GM23248 (cell line): ENCODE measurements at regions of chr6 and their contacts with region 1.

Region 1: DNA sequence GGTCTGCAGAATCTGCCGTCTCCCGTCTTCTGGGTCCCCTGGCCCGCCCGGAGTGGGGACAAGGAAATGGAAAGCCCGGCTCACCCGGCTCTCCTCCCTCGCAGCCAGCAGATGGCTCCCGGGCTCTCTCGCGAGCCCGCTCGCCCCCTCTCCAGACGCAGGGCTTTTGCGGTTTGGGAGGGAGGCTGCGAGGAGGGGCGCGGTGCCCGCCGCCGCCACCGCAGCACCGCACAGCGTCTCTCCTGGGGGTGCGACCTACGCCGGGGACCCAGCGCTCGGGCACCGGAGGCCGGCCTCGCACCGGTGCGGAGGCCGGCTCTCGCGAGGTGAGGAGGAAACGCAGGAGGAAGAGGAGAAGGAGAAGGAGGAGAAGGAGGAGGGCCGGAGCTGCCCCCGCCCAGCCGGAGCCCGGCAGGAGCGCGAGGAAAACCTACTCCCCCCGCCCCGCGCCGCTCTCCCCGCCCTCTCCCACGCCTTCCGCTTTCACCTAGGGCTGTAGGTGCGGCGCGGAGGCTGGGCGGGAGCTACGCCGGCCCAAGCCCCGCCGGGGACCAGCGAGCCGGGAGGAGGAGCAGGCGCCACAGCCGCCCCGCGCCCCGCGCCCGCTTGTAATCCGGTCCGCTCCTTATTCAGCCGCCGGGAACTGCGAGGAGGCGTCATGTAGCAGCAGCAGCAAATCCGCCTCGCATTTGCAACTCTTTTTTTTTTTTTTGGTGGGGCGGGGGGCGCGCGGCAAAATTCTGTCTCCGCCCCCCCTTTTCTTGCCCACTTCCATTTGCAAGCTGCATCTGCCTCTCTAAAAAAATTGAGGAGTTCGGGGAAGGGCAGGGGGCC is at the start of gene CARMIL1:
- DNase-seq: peak; percentile 89
- H3K4me3 ChIP-seq: peak within 1 kb of the TSS; percentile 93
- H3K27ac ChIP-seq: no peak within 1 kb of the TSS
- H3K4me1 ChIP-seq: peaks cover 10% of the 10 kb centered on the region; the same call in 1 of the 2 replicates
- H3K27me3 ChIP-seq: no peaks in the 10 kb centered on the region
- total RNA-seq, gene CARMIL1: 6.3 and 10.9 TPM in 2 replicates

Region 2: GRCh38 chr6:25485821-25486534 is 206.8 kb after region 1 on chr6:
- in situ Hi-C with region 1: loop called (anchors 10 kb)
- DNase-seq: peak; percentile 12
- H3K4me3 ChIP-seq: no peak overlapping the region
- H3K27ac ChIP-seq: no peak overlapping the region
- H3K4me1 ChIP-seq: no peaks in the 10 kb centered on the region
- H3K27me3 ChIP-seq: no peaks in the 10 kb centered on the region